MCF 10A (cell line): ENCODE measurements at regions of chr19 and their contacts with region 1.

Region 1: DNA sequence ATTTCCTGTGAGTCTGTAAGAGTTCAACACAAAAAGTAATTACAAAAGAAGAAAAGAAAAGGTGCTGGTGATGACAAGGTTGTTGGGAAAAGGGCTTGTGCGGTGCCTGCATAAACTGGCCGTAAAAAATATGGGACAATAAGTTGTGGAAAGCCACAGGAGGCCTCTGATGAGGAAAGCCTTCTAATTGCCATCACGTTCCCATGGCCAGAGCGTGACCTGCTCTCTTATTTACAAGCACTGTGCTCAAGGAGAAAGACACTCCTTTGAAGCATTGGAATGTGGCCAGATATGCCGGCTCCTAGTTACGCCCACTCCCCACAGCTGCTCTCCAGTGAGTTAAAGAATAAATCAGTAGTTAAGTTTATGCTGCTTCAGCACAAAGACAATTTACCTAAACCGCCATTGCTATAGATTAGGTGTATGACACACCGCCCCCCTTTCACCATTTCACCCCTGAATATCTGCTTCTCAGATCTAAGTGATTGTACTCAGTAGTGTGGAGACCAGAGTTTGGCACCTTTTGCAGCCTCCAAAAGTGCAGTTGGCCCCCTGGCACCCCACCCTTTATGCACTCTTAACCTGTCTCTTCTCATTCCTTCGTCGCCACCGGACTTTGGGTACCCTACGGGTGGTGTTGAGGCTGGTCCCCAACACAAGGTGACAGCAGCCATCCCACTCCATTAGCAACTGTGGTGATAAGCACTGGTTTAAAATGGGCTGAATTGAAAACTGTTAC is 8.1 kb upstream of the PGLYRP1 start:
- DNase-seq: no peak
- H3K4me3 Mint-ChIP-seq: no peak overlapping the region
- H3K27ac Mint-ChIP-seq: no peak overlapping the region
- H3K4me1 Mint-ChIP-seq: peaks cover 6% of the 10 kb centered on the region
- H3K27me3 Mint-ChIP-seq: no peaks in the 10 kb centered on the region
- CTCF ChIP-seq: no peak

Region 2: GRCh38 chr19:45817010-45817724 is 213.8 kb before region 1 on chr19:
- CTCF ChIA-PET with region 1: no interaction called
- POLR2A ChIA-PET with region 1: no interaction called
- intact Hi-C with region 1: no loop called
- DNase-seq: peak; percentile 93
- H3K4me3 Mint-ChIP-seq: no peak overlapping the region
- H3K27ac Mint-ChIP-seq: no peak overlapping the region
- H3K4me1 Mint-ChIP-seq: no peaks in the 10 kb centered on the region
- H3K27me3 Mint-ChIP-seq: no peaks in the 10 kb centered on the region
- CTCF ChIP-seq: peak; percentile 96

Region 3: DNA sequence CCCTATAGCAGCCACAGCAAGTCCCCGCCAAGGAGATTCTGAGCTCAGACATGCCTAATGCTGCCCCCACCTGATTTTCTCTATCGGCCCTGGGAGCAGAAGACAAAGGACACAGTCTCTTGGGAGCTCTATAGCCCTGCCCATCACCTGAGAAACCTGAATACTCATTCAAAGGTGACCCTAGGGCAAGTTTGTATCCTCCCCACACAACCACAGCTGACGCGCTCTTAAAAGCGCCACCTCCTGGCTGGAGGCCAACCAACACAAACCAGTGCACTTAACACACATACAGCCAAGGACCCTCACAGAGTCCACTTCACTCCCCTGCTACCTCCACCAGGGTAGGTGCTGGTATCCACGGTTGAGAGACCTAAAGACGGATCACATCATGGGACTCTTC is 18.6 kb after region 1 on chr19:
- CTCF ChIA-PET with region 1: interaction called, 11 read pairs
- POLR2A ChIA-PET with region 1: interaction called, 4 read pairs
- intact Hi-C with region 1: no loop called
- DNase-seq: no peak
- H3K4me3 Mint-ChIP-seq: no peak overlapping the region
- H3K27ac Mint-ChIP-seq: no peak overlapping the region
- H3K4me1 Mint-ChIP-seq: no peaks in the 10 kb centered on the region
- H3K27me3 Mint-ChIP-seq: peaks cover 55% of the 10 kb centered on the region
- CTCF ChIP-seq: no peak

Region 4: DNA sequence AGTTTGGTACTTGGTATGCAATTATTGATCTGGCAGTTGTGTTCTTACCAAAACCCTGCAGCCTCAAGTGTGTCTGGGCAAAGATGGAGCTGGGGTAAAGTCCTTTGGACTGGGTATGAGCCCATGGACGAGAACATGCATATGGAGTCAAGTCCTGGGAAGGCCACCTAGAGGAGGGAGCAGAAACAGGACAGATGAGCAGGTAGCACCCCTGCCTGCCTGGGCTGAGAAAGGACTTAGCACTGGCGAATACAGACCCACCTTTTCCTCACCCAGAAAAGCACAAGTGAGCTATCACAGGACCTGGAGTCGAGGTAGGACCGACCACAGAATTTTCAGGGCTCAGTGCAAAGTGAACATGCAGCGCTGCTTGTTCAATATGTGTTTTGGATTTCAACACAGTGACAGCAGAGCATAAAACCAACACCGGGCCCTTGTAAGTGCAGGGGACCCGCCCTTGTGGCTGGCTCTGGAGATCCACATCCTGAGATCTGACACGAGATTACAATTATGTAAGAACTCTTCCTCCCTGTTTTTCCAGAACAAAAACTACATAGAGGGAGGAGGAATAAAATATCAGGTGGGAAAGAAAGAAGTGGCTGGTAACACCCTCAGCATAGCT is 143.0 kb after region 1 on chr19:
- CTCF ChIA-PET with region 1: interaction called, 10 read pairs
- POLR2A ChIA-PET with region 1: interaction called, 3 read pairs
- intact Hi-C with region 1: no loop called
- DNase-seq: no peak
- H3K4me3 Mint-ChIP-seq: no peak overlapping the region
- H3K27ac Mint-ChIP-seq: no peak overlapping the region
- H3K4me1 Mint-ChIP-seq: peaks cover 15% of the 10 kb centered on the region
- H3K27me3 Mint-ChIP-seq: no peaks in the 10 kb centered on the region
- CTCF ChIP-seq: no peak

Region 5: GRCh38 chr19:46211201-46211881 is 180.4 kb after region 1 on chr19:
- CTCF ChIA-PET with region 1: no interaction called
- POLR2A ChIA-PET with region 1: no interaction called
- intact Hi-C with region 1: no loop called
- DNase-seq: peak; percentile 89
- H3K4me3 Mint-ChIP-seq: peak overlapping the region; percentile 19
- H3K27ac Mint-ChIP-seq: peak overlapping the region; percentile 89
- H3K4me1 Mint-ChIP-seq: peaks cover 37% of the 10 kb centered on the region
- H3K27me3 Mint-ChIP-seq: peaks cover 5% of the 10 kb centered on the region
- CTCF ChIP-seq: no peak